ENCODE measurements at regions of chr6 and their contacts with region 1.

Region 1: DNA sequence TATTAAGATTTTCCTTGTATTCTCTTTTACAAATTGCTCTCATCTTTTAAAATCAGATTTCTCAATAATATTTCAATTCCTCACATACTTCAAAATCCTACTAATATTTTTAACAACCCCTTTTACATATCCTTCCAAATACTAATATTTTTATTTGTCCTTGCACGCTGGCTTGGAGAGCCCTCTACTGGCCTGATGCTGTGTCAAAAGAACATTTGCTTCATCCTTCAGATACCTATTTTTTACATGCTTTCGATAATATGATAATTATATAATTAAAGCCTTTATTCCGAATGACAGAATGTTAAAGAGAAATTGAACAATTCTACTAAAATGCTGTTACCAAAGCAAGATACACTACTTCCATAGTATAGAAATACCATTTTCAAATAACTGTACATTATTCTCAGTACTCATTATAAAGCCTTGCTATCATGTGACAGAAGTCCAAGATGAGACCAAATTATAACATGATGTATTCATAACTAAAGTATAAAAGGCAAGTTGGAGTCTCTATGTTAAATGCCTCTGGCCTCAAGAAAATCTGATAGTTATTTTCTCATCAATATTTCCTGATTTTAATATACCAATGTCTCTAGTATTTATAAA is 39.0 kb upstream of the PLN start:
- DNase-seq: no peak
- ATAC-seq: no peak
- H3K4me3 ChIP-seq: no peak overlapping the region
- H3K4me3 Mint-ChIP-seq: no peak overlapping the region
- H3K27ac ChIP-seq: no peak overlapping the region
- H3K27ac Mint-ChIP-seq: peak overlapping the region in 2 of 9 donors; percentile 22 to 25
- H3K4me1 ChIP-seq: no peaks in the 10 kb centered on the region
- H3K4me1 Mint-ChIP-seq: peaks cover 7 to 54% (median 35%) of the 10 kb centered on the region in 7 donors
- H3K27me3 ChIP-seq: no peaks in the 10 kb centered on the region
- H3K27me3 Mint-ChIP-seq: no peaks in the 10 kb centered on the region

Region 2: GRCh38 chr6:118495485-118496280 is 13.4 kb before region 1 on chr6:
- CTCF ChIA-PET with region 1: no interaction called
- POLR2A ChIA-PET with region 1: interaction called, 4 read pairs
- intact Hi-C with region 1: loop called in 1 of 2 experiments (anchors 2 kb)
- DNase-seq: no peak
- ATAC-seq: no peak
- H3K4me3 ChIP-seq: no peak overlapping the region
- H3K4me3 Mint-ChIP-seq: no peak overlapping the region
- H3K27ac ChIP-seq: no peak overlapping the region
- H3K27ac Mint-ChIP-seq: peak overlapping the region in 1 of 9 donors; percentile 14
- H3K4me1 ChIP-seq: no peaks in the 10 kb centered on the region
- H3K4me1 Mint-ChIP-seq: peaks cover 2 to 42% (median 25%) of the 10 kb centered on the region in 7 donors
- H3K27me3 ChIP-seq: no peaks in the 10 kb centered on the region
- H3K27me3 Mint-ChIP-seq: no peaks in the 10 kb centered on the region

Region 3: DNA sequence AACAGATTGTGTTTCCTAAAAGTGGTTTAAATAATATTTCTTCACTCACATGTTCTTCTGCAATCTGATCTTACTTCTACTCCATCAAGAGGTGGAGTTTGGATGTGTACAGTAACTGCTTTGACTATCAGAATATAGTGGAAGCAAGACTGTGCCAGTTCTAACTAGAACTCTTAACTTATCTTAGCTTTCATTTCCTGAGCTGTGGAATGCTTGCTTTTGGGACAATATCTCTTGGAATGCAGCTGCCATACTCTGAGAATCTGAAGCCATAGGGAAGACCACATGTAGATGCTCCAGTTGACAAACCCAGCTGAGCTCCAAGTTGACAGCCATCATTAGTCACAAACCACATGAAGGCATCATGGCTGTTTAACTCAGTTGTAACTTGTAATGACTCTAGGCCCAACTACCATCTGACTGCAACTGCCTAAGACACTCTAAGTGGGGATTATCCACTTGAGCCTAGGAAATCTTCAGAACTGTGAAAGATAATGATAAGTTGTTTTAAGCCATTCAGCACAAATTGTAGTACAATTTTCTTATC is 881.2 kb after region 1 on chr6:
- CTCF ChIA-PET with region 1: no interaction called
- POLR2A ChIA-PET with region 1: no interaction called
- intact Hi-C with region 1: no loop called
- DNase-seq: no peak
- ATAC-seq: no peak
- H3K4me3 ChIP-seq: no peak overlapping the region
- H3K4me3 Mint-ChIP-seq: no peak overlapping the region
- H3K27ac ChIP-seq: no peak overlapping the region
- H3K27ac Mint-ChIP-seq: no peak overlapping the region
- H3K4me1 ChIP-seq: no peaks in the 10 kb centered on the region
- H3K4me1 Mint-ChIP-seq: no peaks in the 10 kb centered on the region
- H3K27me3 ChIP-seq: no peaks in the 10 kb centered on the region
- H3K27me3 Mint-ChIP-seq: peaks cover 0 to 2% (median 0%) of the 10 kb centered on the region in 5 donors